Sigmoid colon (tissue), 7 donors: ENCODE measurements at regions of chr5 and their contacts with region 1.

Region 1: GRCh38 chr5:154647114-154647760 is 107.9 kb upstream of the LARP1 start:
- DNase-seq: peak; percentile 72
- H3K4me3 ChIP-seq: peak overlapping the region; percentile 10 to 38 (median 30)
- H3K27ac ChIP-seq: no peak overlapping the region
- H3K4me1 ChIP-seq: peaks cover 0 to 9% (median 7%) of the 10 kb centered on the region in 4 donors
- H3K27me3 ChIP-seq: peaks cover 0 to 2% (median 0%) of the 10 kb centered on the region in 3 donors
- CTCF ChIP-seq: no peak
- EP300 ChIP-seq: no peak
- POLR2A ChIP-seq: no peak

Region 2: GRCh38 chr5:154356020-154356655 is 291.1 kb before region 1 on chr5:
- intact Hi-C with region 1: no loop called
- DNase-seq: peak; percentile 40
- H3K4me3 ChIP-seq: no peak overlapping the region
- H3K27ac ChIP-seq: no peak overlapping the region
- H3K4me1 ChIP-seq: peaks cover 0 to 13% (median 1%) of the 10 kb centered on the region in 4 donors
- H3K27me3 ChIP-seq: no peaks in the 10 kb centered on the region
- CTCF ChIP-seq: no peak
- EP300 ChIP-seq: no peak
- POLR2A ChIP-seq: no peak

Region 3: GRCh38 chr5:154368041-154368800 is 279.0 kb before region 1 on chr5:
- intact Hi-C with region 1: no loop called
- DNase-seq: peak; percentile 70
- H3K4me3 ChIP-seq: no peak overlapping the region
- H3K27ac ChIP-seq: peak overlapping the region in 3 of 4 donors; percentile 36 to 71 (median 64)
- H3K4me1 ChIP-seq: peaks cover 0 to 72% (median 57%) of the 10 kb centered on the region in 4 donors
- H3K27me3 ChIP-seq: no peaks in the 10 kb centered on the region
- CTCF ChIP-seq: no peak
- EP300 ChIP-seq: no peak
- POLR2A ChIP-seq: no peak

Region 4: GRCh38 chr5:154811653-154812365 is 164.6 kb after region 1 on chr5:
- intact Hi-C with region 1: loop called (anchors 1 kb)
- DNase-seq: peak; percentile 78
- H3K4me3 ChIP-seq: no peak overlapping the region
- H3K27ac ChIP-seq: no peak overlapping the region
- H3K4me1 ChIP-seq: peaks cover 0 to 8% (median 5%) of the 10 kb centered on the region in 4 donors
- H3K27me3 ChIP-seq: no peaks in the 10 kb centered on the region
- CTCF ChIP-seq: peak; percentile 73 to 91 (median 87)
- EP300 ChIP-seq: no peak
- POLR2A ChIP-seq: no peak